Activated CD8-positive, alpha-beta T cell treated with anti-CD3 and anti-CD28 coated beads, Interleukin-2, amount 10 ng/mL, durations not matched to agents 7 days and 5 days (primary cell): ENCODE measurements at regions of chr3 and their contacts with region 1.

Region 1: GRCh38 chr3:19866751-19867347 is 67.2 kb downstream of the EFHB start:
- DNase-seq: peak; percentile 54
- ATAC-seq: no peak
- H3K4me3 Mint-ChIP-seq: no peak overlapping the region
- H3K27ac Mint-ChIP-seq: no peak overlapping the region
- H3K4me1 Mint-ChIP-seq: no peaks in the 10 kb centered on the region
- H3K27me3 Mint-ChIP-seq: peaks cover 10% of the 10 kb centered on the region

Region 2: DNA sequence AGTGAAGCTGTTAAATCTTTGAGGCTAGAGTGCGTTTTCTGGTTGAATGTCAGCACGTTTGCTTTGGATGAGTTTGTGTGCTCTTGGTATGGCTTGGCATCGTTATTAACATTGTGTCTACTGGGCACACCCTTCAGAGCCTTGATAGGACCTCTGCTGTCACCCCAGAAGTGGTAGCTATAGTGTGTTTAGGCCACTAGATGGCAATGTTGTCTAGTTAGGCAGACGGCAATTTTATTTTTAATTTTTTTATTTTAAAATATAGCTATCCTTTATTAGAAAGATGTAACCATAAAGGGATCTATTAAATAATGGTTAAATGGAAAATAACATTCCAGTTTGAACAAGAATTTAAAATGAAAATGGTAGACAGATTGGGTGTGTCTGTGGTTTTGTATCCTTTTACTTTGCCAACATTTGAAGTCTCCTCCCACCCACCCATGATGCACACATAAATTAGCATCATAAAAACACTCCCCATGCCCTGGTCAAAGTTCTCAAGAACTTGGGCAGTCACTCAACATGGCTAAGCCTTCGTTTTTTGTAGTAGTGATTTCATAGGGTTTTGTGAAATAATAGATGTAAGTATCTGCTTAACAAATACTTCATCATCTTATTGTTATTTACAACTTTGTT is 517.8 kb before region 1 on chr3:
- CTCF ChIA-PET with region 1: interaction called, 20 read pairs
- POLR2A ChIA-PET with region 1: no interaction called
- DNase-seq: peak; percentile 30
- ATAC-seq: no peak
- H3K4me3 Mint-ChIP-seq: no peak overlapping the region
- H3K27ac Mint-ChIP-seq: no peak overlapping the region
- H3K4me1 Mint-ChIP-seq: no peaks in the 10 kb centered on the region
- H3K27me3 Mint-ChIP-seq: peaks cover 2% of the 10 kb centered on the region

Region 3: DNA sequence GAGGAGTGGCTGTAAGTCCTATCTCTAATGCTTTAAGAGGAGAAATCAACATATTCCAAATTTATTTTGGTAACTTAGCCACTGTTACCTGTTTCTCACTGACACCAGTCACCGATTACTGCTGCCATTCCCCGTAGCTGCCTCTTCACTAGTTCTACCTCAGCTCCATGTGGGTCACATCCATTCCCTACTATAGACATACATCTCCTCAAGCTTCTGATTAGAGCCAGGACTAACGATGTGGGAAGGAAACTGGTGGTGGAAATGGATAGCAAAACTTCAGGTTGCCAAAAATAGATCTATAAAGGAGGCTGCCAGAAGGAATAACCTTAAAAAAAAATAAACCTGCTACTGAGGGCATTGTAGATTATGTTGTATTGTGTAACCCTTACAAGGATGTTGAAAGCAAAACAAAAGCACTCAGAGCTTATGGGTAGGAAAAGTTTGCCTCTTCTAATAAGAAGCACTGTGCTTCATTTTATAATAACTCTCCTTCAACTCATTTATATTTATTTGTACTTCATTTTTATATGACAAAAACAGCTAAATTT is 229.4 kb after region 1 on chr3:
- CTCF ChIA-PET with region 1: no interaction called
- POLR2A ChIA-PET with region 1: no interaction called
- DNase-seq: no peak
- ATAC-seq: no peak
- H3K4me3 Mint-ChIP-seq: no peak overlapping the region
- H3K27ac Mint-ChIP-seq: no peak overlapping the region
- H3K4me1 Mint-ChIP-seq: peaks cover 56% of the 10 kb centered on the region
- H3K27me3 Mint-ChIP-seq: no peaks in the 10 kb centered on the region